Transverse colon (tissue), 4 donors: ENCODE measurements at regions of chr1 and their contacts with region 1.

Region 1: DNA sequence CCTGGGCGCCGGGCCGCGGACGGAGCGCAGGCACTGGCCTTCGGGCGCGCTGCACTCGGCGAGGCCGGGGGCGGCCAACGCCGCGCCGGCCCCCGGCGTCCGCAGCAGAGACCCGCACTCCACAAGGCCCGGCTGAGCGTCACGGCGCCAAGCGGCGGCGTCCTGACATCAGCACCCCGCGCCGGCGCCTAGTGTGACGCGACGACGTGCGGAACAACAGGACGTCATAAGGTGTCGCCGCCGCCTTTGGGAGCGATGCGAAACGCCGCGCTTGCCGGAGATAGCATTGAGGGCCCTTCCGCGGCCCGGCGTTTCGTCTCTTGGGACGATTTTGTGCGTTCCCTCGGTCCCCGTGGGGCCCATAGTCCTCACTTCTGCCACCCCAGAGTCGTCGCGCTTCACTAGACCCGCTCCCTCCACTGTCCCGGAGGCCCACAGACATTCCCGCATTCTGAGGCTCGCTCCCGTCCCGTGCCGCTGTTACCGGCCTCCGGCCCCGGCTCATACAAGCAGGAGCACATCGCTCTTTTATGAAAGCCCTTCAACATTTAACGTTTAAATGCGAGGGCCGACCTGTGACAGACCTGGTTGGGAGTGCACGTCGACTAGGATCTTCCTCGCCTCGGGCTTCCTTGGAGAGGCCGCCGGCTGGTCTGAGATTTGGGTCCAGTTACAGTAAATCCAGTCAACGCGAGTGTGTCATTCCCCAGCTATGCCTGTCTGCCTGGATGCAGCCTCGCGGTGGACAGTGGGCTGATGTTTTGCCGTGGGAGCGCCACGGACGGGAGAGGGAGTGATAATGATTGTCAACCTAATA is at the start of gene SSU72:
- DNase-seq: peak; percentile 94
- H3K4me3 ChIP-seq: peak within 1 kb of the TSS; percentile 81 to 96 (median 88)
- H3K27ac ChIP-seq: peak within 1 kb of the TSS; percentile 96 to 99 (median 96)
- H3K4me1 ChIP-seq: peaks cover 13 to 33% (median 29%) of the 10 kb centered on the region in 4 donors
- H3K27me3 ChIP-seq: peaks cover 6% of the 10 kb centered on the region
- CTCF ChIP-seq: no peak
- EP300 ChIP-seq: peak; percentile 10
- POLR2A ChIP-seq: peak; percentile 97
- total RNA-seq, gene SSU72: 95.0 to 162 (median 136) TPM

Region 2: DNA sequence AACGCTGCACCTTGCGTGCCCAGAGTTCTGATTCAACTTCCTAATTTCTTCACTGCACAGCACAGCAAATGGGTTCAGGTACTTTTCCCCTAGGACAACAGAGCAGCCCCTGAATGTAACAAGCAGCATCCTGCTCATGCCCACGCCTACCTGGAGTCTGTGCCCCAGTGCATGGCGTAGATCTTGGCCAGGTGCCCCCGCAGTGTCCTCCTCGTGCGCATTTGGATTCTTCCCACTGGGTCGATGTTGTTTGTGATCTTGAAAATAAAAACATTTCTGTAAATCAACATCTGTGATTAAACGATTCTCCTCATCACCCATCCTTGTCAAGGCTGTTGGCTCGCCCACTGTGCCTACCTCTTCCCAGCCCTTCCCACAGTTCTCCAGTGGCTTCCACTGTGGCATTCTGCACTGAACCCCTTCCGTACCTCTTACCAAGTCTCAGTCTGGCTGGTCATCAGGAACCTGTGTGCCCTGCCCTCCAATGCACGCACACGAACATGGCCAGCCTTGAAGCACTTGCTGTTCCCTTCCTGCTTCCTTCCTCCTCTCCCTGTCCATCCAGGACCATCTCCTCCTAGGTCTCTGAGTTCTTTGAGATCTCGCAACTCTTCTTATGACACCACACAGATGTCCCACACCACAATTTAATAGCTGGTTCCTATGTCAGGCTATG is 240.8 kb after region 1 on chr1:
- in situ Hi-C with region 1: no loop called
- intact Hi-C with region 1: loop called (anchors 5 kb)
- DNase-seq: no peak
- H3K4me3 ChIP-seq: no peak overlapping the region
- H3K27ac ChIP-seq: no peak overlapping the region
- H3K4me1 ChIP-seq: no peaks in the 10 kb centered on the region
- H3K27me3 ChIP-seq: no peaks in the 10 kb centered on the region
- CTCF ChIP-seq: no peak
- EP300 ChIP-seq: no peak
- POLR2A ChIP-seq: no peak